Right ventricle myocardium inferior (tissue), 1 donor: ENCODE measurements at regions of chr19 and their contacts with region 1.

Region 1: GRCh38 chr19:35135389-35135909 is 590 bp upstream of the LGI4 start:
- DNase-seq: peak; percentile 84
- ATAC-seq: peak; percentile 52

Region 2: DNA sequence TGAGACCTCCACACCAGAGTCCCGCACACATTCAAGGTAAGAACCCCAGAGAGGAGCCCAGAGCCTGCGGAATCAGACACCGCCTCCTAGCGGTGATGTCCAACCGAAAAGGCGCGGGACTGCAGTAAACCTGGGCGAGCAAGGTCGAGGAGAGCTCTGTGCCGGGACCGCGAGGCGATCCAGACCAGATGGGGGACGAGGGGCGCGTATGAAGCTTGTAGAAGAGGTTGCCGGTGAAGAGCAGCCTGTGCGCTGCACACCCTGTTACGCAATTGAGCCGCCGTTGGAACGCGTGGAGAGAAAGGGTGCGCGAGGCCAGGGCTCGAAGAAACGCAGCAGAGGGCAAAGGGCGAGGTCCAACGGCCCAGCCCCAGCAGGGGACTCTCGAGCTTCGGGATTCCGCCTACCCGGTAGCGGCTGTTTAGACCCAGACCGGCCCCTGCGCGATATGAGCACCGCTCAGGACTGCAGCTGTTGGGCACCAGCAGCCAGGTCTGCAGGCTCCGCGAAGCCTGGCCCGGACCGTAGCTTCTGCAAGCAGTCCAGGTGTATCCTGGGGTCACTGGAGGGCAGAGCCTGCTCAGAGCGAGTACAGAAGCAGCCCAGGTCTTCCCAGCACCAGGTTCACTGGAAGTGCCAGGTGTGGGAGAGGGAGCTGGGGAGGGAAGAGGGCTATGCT is 296.6 kb before region 1 on chr19:
- intact Hi-C with region 1: no loop called
- DNase-seq: no peak
- ATAC-seq: no peak

Region 3: DNA sequence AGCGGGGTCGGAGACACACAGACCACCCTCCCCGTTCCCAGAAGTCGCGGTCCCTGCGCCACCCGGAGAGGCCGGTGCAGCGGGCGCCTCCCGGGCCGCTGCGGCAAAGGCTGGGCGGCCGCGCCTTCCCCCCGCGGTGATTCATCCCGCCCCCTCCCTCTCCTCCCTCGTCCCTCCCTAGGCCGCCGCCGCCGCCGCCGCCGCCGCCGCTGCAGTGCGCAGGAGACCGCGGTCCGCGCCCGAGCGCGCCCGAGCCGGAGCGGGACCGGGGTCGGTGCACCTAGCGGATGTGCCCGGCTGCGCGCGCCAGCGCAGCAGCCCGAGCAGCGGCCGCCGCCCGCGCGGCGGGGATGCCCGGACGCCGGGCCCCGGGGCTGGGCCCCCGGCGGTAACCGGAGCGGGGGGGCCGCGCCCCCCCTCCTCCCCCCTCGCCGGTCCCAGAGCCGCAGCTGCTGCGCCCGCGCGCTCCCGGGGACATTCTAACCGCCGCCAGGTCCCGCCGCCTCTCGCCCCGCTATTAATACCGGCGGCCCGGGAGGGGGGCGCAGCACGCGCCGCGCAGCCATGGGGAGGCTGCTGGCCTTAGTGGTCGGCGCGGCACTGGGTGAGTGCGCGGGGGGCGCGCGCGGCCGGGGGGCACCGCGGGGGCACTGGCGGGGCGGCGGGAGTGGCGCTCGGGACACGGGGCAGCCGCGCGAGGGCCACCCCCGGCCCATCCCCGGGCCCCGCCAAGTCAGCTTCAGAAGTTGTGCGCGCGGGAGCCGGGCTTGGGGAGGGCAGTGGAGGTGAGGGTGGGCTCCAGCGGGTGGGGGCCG is 105.0 kb before region 1 on chr19 and contains the start of gene SCN1B:
- intact Hi-C with region 1: no loop called
- DNase-seq: peak; percentile 82
- ATAC-seq: peak; percentile 73
- total RNA-seq, gene SCN1B: 44.3 TPM

Region 4: GRCh38 chr19:35066691-35067563 is 68.5 kb before region 1 on chr19:
- intact Hi-C with region 1: loop called (anchors 2 kb)
- DNase-seq: peak; percentile 92
- ATAC-seq: peak; percentile 83

Region 5: DNA sequence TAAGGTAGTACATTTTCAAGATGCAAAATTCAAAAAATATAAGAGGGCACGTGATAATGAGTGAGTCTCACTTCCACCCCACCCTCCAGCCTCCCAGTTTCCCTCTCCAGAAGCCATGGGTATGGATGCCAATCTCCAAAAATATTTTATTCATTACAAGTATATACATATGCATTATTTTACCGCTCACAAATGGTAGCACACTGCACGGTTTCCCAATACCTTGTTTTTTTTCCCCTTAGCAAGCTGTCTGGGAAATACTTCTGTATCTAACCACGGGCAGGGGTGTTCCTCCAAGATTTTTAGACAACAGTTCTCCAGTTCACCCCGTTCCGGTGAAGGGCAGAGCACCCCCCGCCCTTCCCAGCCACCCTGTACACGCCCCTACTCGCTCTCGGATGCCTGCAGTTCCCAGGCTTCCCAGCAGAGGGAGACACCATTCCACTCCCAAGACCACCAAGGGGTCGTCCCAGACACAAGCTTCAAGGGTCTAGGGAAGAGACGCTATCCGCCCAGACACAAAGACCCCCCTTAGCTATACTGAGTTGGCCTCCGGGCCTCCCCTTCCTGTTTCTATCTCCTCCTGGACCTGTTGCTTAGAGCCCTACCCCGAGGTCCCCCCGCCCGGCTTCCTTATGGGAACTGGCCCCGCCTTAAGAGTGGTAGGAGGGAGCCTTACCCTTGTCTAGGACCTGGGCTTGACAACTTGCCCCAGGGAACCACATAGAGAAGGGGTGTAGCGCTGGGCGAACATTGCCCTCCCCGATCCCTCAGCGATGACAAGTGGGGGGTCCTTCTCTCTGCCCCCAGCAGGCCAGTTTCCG is 20.9 kb before region 1 on chr19:
- intact Hi-C with region 1: loop called (anchors 1 kb)
- DNase-seq: no peak
- ATAC-seq: peak; percentile 86

Region 6: DNA sequence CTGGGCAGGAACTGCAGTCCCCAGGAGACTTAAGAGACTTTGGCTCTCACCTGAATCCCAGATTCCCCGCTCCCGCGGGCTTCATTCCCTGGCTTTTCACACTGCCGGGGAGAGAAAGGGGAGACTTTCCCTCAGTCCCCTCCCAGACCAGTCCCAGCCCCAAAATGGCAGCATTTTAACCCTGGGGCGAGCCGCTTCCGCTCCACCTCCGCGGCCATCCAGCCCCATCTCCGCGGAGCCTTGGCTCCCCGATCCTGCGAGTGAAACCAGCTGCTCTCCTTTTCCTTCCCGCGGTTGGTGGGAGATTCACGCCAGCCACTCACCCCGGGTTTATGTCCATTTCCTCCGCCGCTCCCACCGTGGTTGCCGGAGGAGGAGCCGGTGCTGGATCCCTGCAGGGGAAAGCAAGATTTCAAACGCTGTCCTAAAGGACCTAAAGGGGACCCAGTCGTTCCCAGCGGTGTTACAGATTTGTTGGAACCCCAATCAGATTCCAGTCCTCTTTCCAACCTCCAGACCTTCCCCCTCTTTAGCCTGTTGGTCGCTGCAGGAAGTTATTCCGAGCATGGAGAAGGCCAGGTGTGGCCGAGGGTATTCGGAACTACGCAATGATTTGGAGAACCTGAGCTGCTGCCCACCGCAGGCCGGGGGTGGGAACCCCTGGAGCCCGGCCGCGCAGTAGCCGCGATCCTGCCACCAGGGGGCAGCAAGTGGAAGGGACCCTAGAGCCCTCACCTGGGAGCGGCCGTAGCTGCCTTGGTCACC is 374.6 kb after region 1 on chr19:
- intact Hi-C with region 1: no loop called
- DNase-seq: peak; percentile 85
- ATAC-seq: no peak